ENCODE measurements at regions of chr2 and their contacts with region 1.

Region 1: DNA sequence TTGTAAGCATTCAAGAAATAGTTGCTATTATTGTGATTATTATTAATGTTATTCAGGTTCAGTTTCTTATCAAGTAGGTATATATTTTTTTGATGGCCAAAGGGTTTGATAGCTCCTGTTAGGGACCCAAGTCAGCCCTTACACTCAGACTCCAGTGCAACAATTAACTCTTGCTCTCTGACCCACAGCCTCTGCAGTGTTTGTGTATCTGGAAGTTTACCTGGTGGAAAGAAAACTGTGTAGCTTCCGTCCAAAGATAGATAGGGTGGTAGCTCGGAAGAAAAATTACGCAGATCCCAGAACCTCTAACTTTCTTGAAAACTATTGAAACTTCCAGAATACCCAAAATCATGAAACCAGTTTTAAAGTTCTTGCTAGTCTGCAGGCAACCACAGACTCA is 58.6 kb upstream of the IGFBP2 start:
- DNase-seq: no peak
- ATAC-seq: no peak
- H3K4me3 ChIP-seq: no peak overlapping the region
- H3K4me3 Mint-ChIP-seq: no peak overlapping the region
- H3K27ac ChIP-seq: no peak overlapping the region
- H3K27ac Mint-ChIP-seq: no peak overlapping the region
- H3K4me1 ChIP-seq: peaks cover 0 to 4% of the 10 kb centered on the region in 2 experiments
- H3K4me1 Mint-ChIP-seq: peaks cover 4 to 15% (median 7%) of the 10 kb centered on the region in 3 donors
- H3K27me3 ChIP-seq: peaks cover 0 to 7% of the 10 kb centered on the region in 2 experiments
- H3K27me3 Mint-ChIP-seq: peaks cover 6 to 12% of the 10 kb centered on the region in 2 donors

Region 2: GRCh38 chr2:216424274-216424673 is 150.3 kb before region 1 on chr2:
- CTCF ChIA-PET with region 1: no interaction called
- POLR2A ChIA-PET with region 1: interaction called in 1 of 2 experiments, 13 read pairs
- DNase-seq: no peak
- ATAC-seq: no peak
- H3K4me3 ChIP-seq: no peak overlapping the region
- H3K4me3 Mint-ChIP-seq: no peak overlapping the region
- H3K27ac ChIP-seq: no peak overlapping the region
- H3K27ac Mint-ChIP-seq: no peak overlapping the region
- H3K4me1 ChIP-seq: no peaks in the 10 kb centered on the region
- H3K4me1 Mint-ChIP-seq: peaks cover 0 to 4% (median 2%) of the 10 kb centered on the region in 3 donors
- H3K27me3 ChIP-seq: no peaks in the 10 kb centered on the region
- H3K27me3 Mint-ChIP-seq: no peaks in the 10 kb centered on the region

Region 3: GRCh38 chr2:216465580-216466197 is 108.9 kb before region 1 on chr2:
- CTCF ChIA-PET with region 1: no interaction called
- POLR2A ChIA-PET with region 1: no interaction called
- DNase-seq: no peak
- ATAC-seq: no peak
- H3K4me3 ChIP-seq: no peak overlapping the region
- H3K4me3 Mint-ChIP-seq: no peak overlapping the region
- H3K27ac ChIP-seq: no peak overlapping the region
- H3K27ac Mint-ChIP-seq: no peak overlapping the region
- H3K4me1 ChIP-seq: no peaks in the 10 kb centered on the region
- H3K4me1 Mint-ChIP-seq: no peaks in the 10 kb centered on the region
- H3K27me3 ChIP-seq: no peaks in the 10 kb centered on the region
- H3K27me3 Mint-ChIP-seq: no peaks in the 10 kb centered on the region

Region 4: DNA sequence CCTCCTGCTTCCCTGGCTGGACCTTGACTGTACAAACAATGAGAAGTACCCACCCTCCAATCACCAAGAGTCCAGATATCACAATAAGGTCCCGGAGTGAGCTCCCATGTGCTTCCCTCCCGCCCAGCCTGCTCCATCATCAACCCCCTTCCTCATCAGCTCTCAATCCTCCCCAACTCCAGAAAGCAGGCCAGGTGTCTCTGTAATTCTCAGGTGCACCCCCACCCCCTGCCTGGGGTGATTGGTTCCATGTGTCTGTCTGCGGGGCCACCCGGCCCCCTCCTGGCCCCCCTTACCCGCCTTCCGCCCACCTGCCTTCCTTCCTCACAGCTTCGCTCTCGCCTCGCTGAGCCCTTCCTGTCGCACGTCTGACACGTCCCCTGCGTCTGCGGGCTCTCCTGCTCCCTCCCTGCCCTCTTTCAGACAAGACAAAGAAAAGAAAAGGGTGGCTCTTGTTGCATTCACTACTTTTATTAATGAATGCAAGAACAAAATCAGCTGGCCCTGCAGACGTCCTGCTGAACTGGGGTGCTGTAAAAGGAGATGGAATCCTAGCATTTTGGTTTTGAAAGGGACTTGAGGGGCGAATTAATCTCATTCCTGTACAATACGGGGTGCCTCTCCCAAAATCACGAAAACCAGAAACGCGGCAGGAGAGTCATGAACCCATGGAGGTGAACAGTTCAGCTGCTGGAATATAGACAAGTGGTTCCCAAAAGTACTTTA is 32.1 kb after region 1 on chr2:
- CTCF ChIA-PET with region 1: no interaction called
- POLR2A ChIA-PET with region 1: no interaction called
- DNase-seq: peak; percentile 1 to 58 (median 27)
- ATAC-seq: peak; percentile 81 to 96 (median 90)
- H3K4me3 ChIP-seq: peak overlapping the region; percentile 22 to 42
- H3K4me3 Mint-ChIP-seq: peak overlapping the region; percentile 18 to 71 (median 45)
- H3K27ac ChIP-seq: no peak overlapping the region
- H3K27ac Mint-ChIP-seq: no peak overlapping the region
- H3K4me1 ChIP-seq: peaks cover 11 to 15% of the 10 kb centered on the region in 2 experiments
- H3K4me1 Mint-ChIP-seq: peaks cover 9 to 10% (median 9%) of the 10 kb centered on the region in 3 donors
- H3K27me3 ChIP-seq: peaks cover 0 to 19% of the 10 kb centered on the region in 2 experiments
- H3K27me3 Mint-ChIP-seq: peaks cover 4 to 28% of the 10 kb centered on the region in 2 donors

Measured in T-cell (primary cell).